CD4-positive, alpha-beta T cell (primary cell): ENCODE measurements at regions of chr1 and their contacts with region 1.

Region 1: GRCh38 chr1:150072959-150073358 is 5.4 kb downstream of the VPS45 start:
- DNase-seq: peak in 3 of 14 experiments; percentile 37 to 60 (median 45)
- ATAC-seq: peak; percentile 80
- H3K4me3 ChIP-seq: no peak overlapping the region
- H3K4me3 Mint-ChIP-seq: peak overlapping the region; percentile 56
- H3K27ac ChIP-seq: no peak overlapping the region
- H3K27ac Mint-ChIP-seq: no peak overlapping the region
- H3K4me1 ChIP-seq: no peaks in the 10 kb centered on the region
- H3K4me1 Mint-ChIP-seq: peaks cover 38% of the 10 kb centered on the region
- H3K27me3 ChIP-seq: no peaks in the 10 kb centered on the region
- H3K27me3 Mint-ChIP-seq: no peaks in the 10 kb centered on the region
- CTCF ChIP-seq: peak; percentile 72

Region 2: GRCh38 chr1:150109586-150109985 is 36.6 kb after region 1 on chr1:
- CTCF ChIA-PET with region 1: interaction called, 3 read pairs
- POLR2A ChIA-PET with region 1: interaction called, 12 read pairs
- intact Hi-C with region 1: loop called in 1 of 2 experiments (anchors 2 kb)
- DNase-seq: peak in 4 of 14 experiments; percentile 11 to 74 (median 58)
- ATAC-seq: peak; percentile 57
- H3K4me3 ChIP-seq: peak overlapping the region; percentile 58
- H3K4me3 Mint-ChIP-seq: peak overlapping the region; percentile 88
- H3K27ac ChIP-seq: peak overlapping the region; percentile 59 to 77
- H3K27ac Mint-ChIP-seq: peak overlapping the region; percentile 86
- H3K4me1 ChIP-seq: peaks cover 49% of the 10 kb centered on the region
- H3K4me1 Mint-ChIP-seq: peaks cover 85% of the 10 kb centered on the region
- H3K27me3 ChIP-seq: no peaks in the 10 kb centered on the region
- H3K27me3 Mint-ChIP-seq: no peaks in the 10 kb centered on the region
- CTCF ChIP-seq: no peak

Region 3: DNA sequence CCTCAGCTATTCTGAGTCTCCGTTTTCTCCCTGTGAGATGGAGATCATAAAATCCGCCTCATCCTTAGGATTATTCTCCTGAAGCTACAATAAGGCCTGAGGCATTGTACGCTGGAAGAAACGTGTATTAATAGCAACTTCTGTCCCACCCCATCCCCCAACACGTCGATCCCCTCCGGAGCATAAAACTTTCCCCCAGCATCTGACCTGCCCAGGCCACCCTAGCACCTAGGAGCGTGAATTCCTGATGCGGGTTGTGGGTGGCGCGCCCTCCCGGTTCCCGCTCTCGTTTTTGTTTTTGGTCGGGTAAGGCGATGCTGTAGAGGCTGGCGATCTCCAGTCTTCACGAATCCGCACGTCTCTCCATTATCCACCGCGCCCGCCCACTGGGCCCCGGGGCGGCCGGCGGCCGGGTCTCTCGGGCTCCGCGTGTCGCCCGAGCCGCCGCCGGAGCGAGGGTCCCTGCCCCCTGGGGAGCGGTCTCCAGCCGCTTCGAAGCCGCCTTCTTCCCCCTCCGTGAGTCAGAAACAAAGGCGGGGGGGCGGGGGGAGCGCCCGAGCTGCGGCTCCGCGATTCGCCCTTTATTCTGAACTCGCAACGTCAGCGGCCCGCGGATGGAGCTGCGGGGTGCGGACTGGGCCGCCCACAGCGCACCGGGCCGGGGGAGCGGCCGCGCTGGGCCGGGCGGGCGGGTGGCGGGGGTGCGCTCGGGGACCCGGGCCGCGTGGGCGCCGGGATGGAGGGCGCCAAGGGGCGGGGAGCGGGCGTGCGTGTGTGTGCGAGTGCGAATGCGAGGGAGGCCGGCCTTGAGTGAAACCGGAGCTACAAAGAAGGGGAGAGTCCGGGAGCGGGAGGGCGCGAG is 76.5 kb after region 1 on chr1 and contains the start of gene PLEKHO1:
- CTCF ChIA-PET with region 1: interaction called, 4 read pairs
- POLR2A ChIA-PET with region 1: interaction called, 19 read pairs
- intact Hi-C with region 1: no loop called
- DNase-seq: peak; percentile 70 to 92 (median 86)
- ATAC-seq: peak; percentile 60
- H3K4me3 ChIP-seq: peak within 1 kb of the TSS; percentile 97
- H3K4me3 Mint-ChIP-seq: peak within 1 kb of the TSS; percentile 94
- H3K27ac ChIP-seq: peak within 1 kb of the TSS; percentile 79 to 82
- H3K27ac Mint-ChIP-seq: peak within 1 kb of the TSS; percentile 96
- H3K4me1 ChIP-seq: peaks cover 57% of the 10 kb centered on the region
- H3K4me1 Mint-ChIP-seq: peaks cover 74% of the 10 kb centered on the region
- H3K27me3 ChIP-seq: no peaks in the 10 kb centered on the region
- H3K27me3 Mint-ChIP-seq: no peaks in the 10 kb centered on the region
- CTCF ChIP-seq: no peak
- total RNA-seq, gene PLEKHO1: 97.6 to 110 TPM

Region 4: GRCh38 chr1:150162862-150163706 is 90.1 kb after region 1 on chr1:
- CTCF ChIA-PET with region 1: interaction called, 77 read pairs
- POLR2A ChIA-PET with region 1: interaction called, 19 read pairs
- intact Hi-C with region 1: loop called (anchors 1 kb)
- DNase-seq: peak in 4 of 14 experiments; percentile 30 to 68 (median 48)
- ATAC-seq: peak; percentile 54
- H3K4me3 ChIP-seq: no peak overlapping the region
- H3K4me3 Mint-ChIP-seq: peak overlapping the region; percentile 8
- H3K27ac ChIP-seq: no peak overlapping the region
- H3K27ac Mint-ChIP-seq: peak overlapping the region; percentile 42
- H3K4me1 ChIP-seq: peaks cover 58% of the 10 kb centered on the region
- H3K4me1 Mint-ChIP-seq: peaks cover 49% of the 10 kb centered on the region
- H3K27me3 ChIP-seq: no peaks in the 10 kb centered on the region
- H3K27me3 Mint-ChIP-seq: no peaks in the 10 kb centered on the region
- CTCF ChIP-seq: no peak

Region 5: GRCh38 chr1:150168960-150169601 is 96.1 kb after region 1 on chr1:
- CTCF ChIA-PET with region 1: interaction called, 77 read pairs
- POLR2A ChIA-PET with region 1: no interaction called
- intact Hi-C with region 1: loop called (anchors 1 kb)
- DNase-seq: peak in 11 of 14 experiments; percentile 33 to 75 (median 45)
- ATAC-seq: no peak
- H3K4me3 ChIP-seq: no peak overlapping the region
- H3K4me3 Mint-ChIP-seq: no peak overlapping the region
- H3K27ac ChIP-seq: no peak overlapping the region
- H3K27ac Mint-ChIP-seq: no peak overlapping the region
- H3K4me1 ChIP-seq: peaks cover 6% of the 10 kb centered on the region
- H3K4me1 Mint-ChIP-seq: no peaks in the 10 kb centered on the region
- H3K27me3 ChIP-seq: peaks cover 0 to 2% of the 10 kb centered on the region in 2 experiments
- H3K27me3 Mint-ChIP-seq: no peaks in the 10 kb centered on the region
- CTCF ChIP-seq: peak; percentile 66

Region 6: DNA sequence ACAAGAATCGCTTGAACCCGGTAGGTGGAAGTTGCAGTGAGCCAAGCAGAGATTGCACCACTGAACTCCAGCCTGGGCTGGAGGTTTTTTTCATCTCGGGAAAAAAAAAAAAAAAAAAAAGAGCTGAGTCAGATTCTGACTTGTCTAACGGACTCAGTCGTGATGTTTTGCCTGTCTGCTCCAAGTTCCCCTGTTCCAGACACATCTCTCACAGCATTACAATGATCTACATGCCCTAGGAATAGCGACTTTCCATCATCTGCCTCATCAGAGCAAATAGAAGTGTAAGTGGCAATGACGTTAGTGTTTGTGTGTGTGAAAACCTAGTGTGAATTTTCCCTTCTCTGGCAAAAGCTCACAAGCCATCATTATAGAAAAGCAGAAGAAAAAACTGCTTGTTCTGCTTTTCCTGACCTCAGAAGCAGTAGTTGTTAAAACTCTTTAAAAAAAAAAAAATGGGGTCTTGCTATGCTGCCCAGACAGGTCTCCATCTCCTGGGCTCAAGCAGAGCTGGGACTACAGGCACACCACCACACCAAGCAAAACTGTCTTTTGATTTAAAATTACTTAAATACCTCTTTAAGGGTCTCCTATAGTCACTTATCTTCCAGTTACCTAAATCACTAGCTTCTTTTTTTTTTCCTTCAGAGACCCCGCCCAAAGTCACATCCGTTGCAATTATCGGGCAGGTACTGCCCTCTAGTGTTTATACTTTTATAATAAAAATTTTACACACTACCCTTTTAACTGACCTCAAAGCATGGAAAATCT is 114.0 kb after region 1 on chr1:
- CTCF ChIA-PET with region 1: interaction called, 31 read pairs
- POLR2A ChIA-PET with region 1: interaction called, 8 read pairs
- intact Hi-C with region 1: loop called (anchors 1 kb)
- DNase-seq: peak in 7 of 14 experiments; percentile 6 to 79 (median 49)
- ATAC-seq: peak; percentile 84
- H3K4me3 ChIP-seq: no peak overlapping the region
- H3K4me3 Mint-ChIP-seq: no peak overlapping the region
- H3K27ac ChIP-seq: no peak overlapping the region
- H3K27ac Mint-ChIP-seq: no peak overlapping the region
- H3K4me1 ChIP-seq: peaks cover 10% of the 10 kb centered on the region
- H3K4me1 Mint-ChIP-seq: peaks cover 9% of the 10 kb centered on the region
- H3K27me3 ChIP-seq: peaks cover 0 to 3% of the 10 kb centered on the region in 2 experiments
- H3K27me3 Mint-ChIP-seq: peaks cover 4% of the 10 kb centered on the region
- CTCF ChIP-seq: peak; percentile 86